ENCODE measurements at regions of chr1 and their contacts with region 1.

Region 1: DNA sequence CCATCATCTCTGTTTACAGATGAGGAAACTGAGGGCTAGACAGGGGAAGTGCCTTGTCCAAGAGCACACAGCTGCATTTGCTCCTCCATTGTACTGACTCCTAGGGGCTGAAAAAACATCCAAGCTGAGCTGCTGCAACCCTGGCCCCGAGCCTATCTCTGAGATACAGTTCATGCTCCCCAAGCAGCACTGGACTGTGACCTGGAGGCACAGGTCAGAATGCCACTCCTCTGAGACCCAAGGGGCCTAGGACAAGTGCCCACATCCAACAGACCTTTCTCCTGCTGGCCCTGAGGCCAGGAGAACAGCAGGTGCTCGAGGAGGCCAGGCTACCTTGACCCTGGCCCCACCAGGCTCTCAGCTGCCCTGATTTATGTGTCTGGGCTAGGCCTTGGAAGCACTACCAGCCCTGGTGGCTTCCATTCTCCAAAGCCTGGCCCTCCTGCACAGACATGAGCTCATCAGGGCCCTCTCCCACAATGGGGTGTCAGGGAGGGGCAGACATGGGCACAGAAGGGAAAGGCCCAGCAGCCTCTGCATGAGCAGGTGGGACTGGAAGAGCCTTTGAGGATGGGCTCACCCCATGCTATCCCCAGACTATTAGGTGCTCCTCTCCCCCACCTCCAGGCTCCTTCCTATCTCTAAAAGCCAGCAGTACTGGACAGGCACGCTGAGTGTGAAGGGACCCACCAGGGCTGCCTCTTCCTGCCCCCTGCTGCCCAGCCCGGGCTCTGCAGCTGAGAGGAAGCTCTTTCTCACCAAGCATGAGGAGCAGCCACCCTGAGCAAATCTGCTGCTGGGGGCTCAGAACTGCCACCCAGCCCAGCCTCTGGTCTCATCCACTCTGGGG is 18.8 kb downstream of the ADGRB2 start:
- DNase-seq: peak; percentile 49
- H3K4me3 ChIP-seq: no peak overlapping the region
- H3K27ac ChIP-seq: no peak overlapping the region
- H3K4me1 ChIP-seq: no peaks in the 10 kb centered on the region
- H3K27me3 ChIP-seq: no peaks in the 10 kb centered on the region
- CTCF ChIP-seq: peak; percentile 82 to 93

Region 2: DNA sequence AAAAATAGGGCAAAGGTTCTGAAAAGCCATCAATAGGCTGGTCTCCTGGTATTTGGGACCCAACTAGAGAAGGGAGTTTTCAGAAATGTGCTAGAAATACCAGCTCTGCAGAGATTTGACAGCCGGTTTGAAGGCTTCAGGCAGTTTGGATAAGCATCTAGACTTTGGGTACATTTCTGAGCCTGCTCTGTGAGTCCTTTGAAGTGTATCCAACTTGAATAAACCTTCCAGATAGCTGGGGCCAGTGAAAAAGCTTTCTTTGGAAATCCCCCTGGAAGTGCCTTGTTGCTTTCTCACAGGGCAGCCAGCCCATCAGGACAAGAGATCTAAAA is 94.3 kb before region 1 on chr1:
- CTCF ChIA-PET with region 1: no interaction called
- dilution Hi-C with region 1: no loop called
- in situ Hi-C with region 1: no loop called
- intact Hi-C with region 1: no loop called
- DNase-seq: no peak
- H3K4me3 ChIP-seq: no peak overlapping the region
- H3K27ac ChIP-seq: no peak overlapping the region
- H3K4me1 ChIP-seq: peaks cover 11% of the 10 kb centered on the region
- H3K27me3 ChIP-seq: no peaks in the 10 kb centered on the region
- CTCF ChIP-seq: no peak

Region 3: GRCh38 chr1:31663622-31664452 is 81.5 kb before region 1 on chr1:
- CTCF ChIA-PET with region 1: no interaction called
- dilution Hi-C with region 1: no loop called
- in situ Hi-C with region 1: loop called in 1 of 2 experiments (anchors 10 kb)
- intact Hi-C with region 1: loop called (anchors 1 kb)
- DNase-seq: no peak
- H3K4me3 ChIP-seq: no peak overlapping the region
- H3K27ac ChIP-seq: no peak overlapping the region
- H3K4me1 ChIP-seq: peaks cover 23% of the 10 kb centered on the region
- H3K27me3 ChIP-seq: no peaks in the 10 kb centered on the region
- CTCF ChIP-seq: peak; percentile 75 to 77

Region 4: DNA sequence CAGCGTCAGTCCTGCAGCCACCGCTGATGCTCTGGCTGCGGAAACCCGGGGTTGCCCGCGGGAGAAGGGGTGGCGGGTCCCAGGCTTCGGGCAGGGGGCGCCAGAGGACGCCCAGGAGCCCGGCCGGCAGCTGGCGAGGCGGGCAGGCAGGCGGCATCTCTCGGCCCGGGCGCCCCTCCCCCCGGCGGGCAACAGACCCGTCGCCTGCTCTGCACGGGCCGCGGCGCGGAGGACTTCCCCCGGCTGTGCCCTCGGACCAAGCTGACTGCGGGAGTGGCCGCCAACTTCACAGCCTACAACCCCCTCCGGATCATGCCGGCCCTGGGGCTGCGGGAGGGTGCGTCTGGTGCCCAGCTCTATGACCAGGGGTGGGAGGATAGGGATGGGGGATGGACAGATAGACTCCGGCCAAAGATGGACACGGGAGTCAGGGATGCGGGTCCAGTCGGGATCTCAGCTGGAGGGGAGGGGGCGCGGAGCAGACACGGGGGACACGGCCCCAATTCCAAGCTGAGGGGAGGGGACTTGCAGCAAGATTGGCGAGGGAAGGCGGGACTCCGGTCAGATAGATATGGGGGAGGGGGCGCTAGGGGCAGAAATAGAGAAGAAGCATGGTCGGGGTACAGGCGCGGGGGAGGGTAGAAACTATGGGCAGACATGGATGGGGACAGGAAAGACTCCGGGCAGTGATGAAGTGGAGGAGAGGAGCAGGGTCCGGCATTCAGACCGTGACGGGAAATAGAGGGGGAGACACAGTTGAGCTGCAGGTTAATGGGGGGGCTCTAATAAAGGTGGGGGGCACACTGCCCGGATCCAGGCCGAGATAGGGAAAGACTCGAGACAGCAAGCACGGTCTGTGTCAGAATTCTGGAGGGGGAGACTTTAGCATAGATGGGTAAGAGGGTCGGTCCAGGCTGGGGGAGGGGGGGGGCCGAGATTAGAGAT is 17.7 kb after region 1 on chr1:
- CTCF ChIA-PET with region 1: interaction called, 35 read pairs
- dilution Hi-C with region 1: no loop called
- in situ Hi-C with region 1: no loop called
- intact Hi-C with region 1: no loop called
- DNase-seq: peak; percentile 43
- H3K4me3 ChIP-seq: peak overlapping the region; percentile 29 to 48 (median 32)
- H3K27ac ChIP-seq: no peak overlapping the region
- H3K4me1 ChIP-seq: peaks cover 38% of the 10 kb centered on the region
- H3K27me3 ChIP-seq: no peaks in the 10 kb centered on the region
- CTCF ChIP-seq: peak; percentile 25 to 62